ENCODE measurements at regions of chr6 and their contacts with region 1.

Region 1: DNA sequence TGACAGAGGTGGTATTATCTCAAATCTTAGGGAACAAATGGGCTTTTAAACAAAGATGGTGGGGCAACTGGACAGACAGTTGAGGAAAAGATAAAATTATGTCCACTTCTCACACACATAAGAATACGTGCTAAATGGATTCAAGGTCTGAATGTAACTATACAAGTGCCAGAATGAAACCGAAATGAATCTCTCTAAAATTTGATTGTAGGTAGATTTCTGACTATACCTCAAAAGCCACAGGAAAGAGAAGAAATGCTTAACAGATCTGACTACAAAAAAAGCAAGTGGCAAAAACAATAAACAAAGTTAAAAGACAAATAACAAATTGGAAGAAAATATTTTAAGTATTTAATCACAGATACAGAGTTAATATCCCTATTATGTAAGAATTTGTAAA is 182.7 kb upstream of the OLIG3 start:
- DNase-seq: no peak
- H3K4me3 Mint-ChIP-seq: peak overlapping the region; percentile 20
- H3K27ac Mint-ChIP-seq: peak overlapping the region; percentile 88
- H3K4me1 Mint-ChIP-seq: peaks cover 63% of the 10 kb centered on the region
- H3K27me3 Mint-ChIP-seq: peaks cover 3% of the 10 kb centered on the region

Region 2: DNA sequence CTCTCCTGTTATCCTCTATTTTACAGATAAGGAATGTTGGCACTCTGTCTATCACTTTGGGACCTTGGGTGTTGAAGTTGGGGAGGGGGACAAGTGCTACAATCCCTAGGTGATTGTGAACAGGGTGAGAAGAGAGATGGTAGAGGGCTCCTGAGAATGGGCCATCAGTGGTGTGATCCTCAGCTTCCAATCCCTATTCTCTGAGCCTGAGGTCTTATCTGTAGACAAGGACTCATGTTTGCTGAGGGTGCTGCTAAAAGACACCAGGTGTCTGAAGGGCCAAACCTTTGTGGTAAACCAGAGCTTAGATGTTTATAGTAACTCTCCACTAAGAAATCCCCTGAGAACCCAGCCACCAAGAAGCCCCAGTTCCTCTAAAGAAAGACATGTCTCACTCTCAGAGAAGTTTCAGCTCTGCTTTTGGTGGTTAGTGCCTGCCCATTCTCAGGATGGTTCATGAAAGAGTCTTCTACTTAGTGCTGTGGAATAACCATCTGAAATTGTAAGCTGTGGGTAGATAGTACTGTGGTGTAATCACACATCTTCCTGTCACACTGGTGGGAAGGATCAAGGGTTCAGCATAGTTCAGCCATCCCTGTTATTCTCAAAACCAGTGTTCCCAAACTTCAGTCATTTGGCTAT is 573.9 kb before region 1 on chr6:
- intact Hi-C with region 1: loop called (anchors 1 kb)
- DNase-seq: peak; percentile 57
- H3K4me3 Mint-ChIP-seq: peak overlapping the region; percentile 43
- H3K27ac Mint-ChIP-seq: peak overlapping the region; percentile 79
- H3K4me1 Mint-ChIP-seq: peaks cover 56% of the 10 kb centered on the region
- H3K27me3 Mint-ChIP-seq: no peaks in the 10 kb centered on the region

Region 3: DNA sequence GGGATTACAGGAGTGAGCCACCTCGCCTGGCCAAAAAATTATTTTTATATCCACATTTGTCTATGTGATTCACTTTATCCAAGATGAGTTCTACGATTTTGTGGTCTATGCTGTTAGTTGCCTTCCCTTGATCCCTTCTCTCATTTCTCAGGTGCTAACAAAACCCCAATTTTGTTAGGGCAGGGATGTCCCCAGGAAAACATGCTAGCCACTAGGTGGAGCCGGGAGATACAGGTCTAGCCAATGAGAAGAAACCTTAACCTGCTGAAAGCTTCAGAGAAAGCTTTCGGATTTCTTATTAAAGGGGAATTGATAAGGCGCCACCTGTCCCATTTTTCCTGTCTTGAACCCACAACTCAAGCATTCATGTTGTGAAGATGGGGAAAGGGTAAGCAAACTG is 15.3 kb before region 1 on chr6:
- intact Hi-C with region 1: loop called (anchors 1 kb)
- DNase-seq: no peak
- H3K4me3 Mint-ChIP-seq: no peak overlapping the region
- H3K27ac Mint-ChIP-seq: no peak overlapping the region
- H3K4me1 Mint-ChIP-seq: peaks cover 58% of the 10 kb centered on the region
- H3K27me3 Mint-ChIP-seq: peaks cover 2% of the 10 kb centered on the region

Region 4: DNA sequence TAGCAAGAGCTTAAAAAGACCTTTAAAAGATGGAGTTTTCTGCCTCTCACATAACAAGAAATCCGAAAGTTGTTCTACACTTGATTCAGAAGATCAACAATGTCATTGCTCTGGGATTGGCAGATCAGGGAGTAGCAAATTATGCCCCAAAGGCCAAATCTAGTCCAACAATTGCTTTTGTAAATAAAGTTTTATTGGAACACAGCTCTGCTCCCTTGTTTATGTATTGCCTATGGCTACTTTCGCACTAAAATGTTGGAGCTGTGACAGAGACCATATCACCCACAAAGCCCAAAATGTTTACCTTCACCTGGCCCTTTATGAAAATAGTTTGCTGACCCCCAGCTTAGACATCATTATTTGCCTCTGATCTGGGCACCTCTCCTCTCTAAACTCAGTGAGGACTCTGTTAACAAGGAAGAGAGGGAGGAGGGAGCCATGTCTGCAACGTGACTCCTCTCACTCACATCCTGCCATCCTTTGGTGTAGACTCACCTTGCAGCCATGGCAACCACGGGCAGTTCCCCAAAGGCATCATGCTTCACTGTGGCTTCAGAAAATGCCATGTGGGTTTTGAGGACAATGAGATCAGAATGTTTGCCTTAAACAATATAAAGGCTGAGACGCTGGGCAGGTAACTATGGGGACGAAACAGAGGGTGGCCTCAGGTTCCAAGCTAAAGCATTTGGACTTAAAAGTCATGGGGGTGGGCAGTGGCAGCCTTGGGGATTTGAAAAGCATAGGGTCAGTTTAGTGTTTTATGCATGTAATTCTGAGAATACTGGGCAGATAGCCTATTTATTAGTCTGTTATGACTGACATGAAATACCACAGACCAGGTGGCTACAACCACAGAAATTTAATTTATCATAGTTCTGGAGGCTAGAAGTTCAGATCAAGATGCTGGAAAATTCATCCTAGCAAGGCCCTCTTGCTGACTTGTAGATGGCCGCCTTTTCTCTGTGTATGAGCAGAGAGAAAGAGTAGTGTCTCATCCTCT is 40.5 kb after region 1 on chr6:
- intact Hi-C with region 1: no loop called
- DNase-seq: peak; percentile 81
- H3K4me3 Mint-ChIP-seq: peak overlapping the region; percentile 59
- H3K27ac Mint-ChIP-seq: peak overlapping the region; percentile 90
- H3K4me1 Mint-ChIP-seq: peaks cover 66% of the 10 kb centered on the region
- H3K27me3 Mint-ChIP-seq: peaks cover 5% of the 10 kb centered on the region

Region 5: DNA sequence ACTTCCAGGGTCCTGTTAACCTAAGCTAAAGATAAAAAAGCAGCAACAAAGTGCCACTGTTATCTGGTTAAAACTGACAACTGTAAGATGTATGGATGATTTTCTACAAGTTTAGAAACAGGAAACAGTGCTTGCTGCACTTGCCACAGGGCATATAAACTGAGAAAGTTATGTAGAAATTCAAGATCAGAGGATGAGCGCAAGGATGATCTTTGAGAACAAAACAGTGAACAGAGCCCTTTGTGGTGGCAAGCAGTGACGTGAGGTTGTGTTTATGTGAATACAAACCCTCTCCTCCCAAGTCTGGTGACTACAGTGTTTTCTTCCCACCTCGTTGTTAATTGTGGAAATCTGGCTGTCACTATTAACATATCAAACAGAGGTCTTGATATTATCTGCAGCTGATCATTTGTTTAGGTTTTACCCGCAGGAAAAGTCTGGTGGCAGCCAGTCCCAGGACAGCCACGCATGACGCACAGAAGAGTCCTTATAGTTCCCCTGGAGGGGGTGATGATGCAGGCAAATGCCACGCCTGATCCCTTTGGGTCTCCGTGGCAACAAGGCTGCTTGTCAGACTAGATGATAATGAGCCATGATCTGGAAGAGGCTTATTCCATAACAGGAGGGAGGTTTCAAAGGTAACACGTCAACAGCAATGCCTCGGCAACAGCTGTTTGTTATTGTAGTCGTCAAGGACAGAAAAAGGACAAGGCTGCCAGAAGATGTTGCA is 147.1 kb after region 1 on chr6:
- intact Hi-C with region 1: loop called (anchors 1 kb)
- DNase-seq: peak; percentile 68
- H3K4me3 Mint-ChIP-seq: peak overlapping the region; percentile 71
- H3K27ac Mint-ChIP-seq: peak overlapping the region; percentile 98
- H3K4me1 Mint-ChIP-seq: peaks cover 88% of the 10 kb centered on the region
- H3K27me3 Mint-ChIP-seq: no peaks in the 10 kb centered on the region

Region 6: GRCh38 chr6:137927777-137928218 is 250.9 kb after region 1 on chr6:
- intact Hi-C with region 1: loop called (anchors 1 kb)
- DNase-seq: peak; percentile 80
- H3K4me3 Mint-ChIP-seq: peak overlapping the region; percentile 52
- H3K27ac Mint-ChIP-seq: peak overlapping the region; percentile 93
- H3K4me1 Mint-ChIP-seq: peaks cover 82% of the 10 kb centered on the region
- H3K27me3 Mint-ChIP-seq: no peaks in the 10 kb centered on the region

Region 7: GRCh38 chr6:139153855-139154254 is 1477.0 kb after region 1 on chr6:
- intact Hi-C with region 1: loop called (anchors 10 kb)
- DNase-seq: no peak
- H3K4me3 Mint-ChIP-seq: peak overlapping the region; percentile 66
- H3K27ac Mint-ChIP-seq: peak overlapping the region; percentile 90
- H3K4me1 Mint-ChIP-seq: peaks cover 73% of the 10 kb centered on the region
- H3K27me3 Mint-ChIP-seq: no peaks in the 10 kb centered on the region

Measured in activated T-helper 1 cell treated with anti-CD3 and anti-CD28 coated beads, Interleukin-12 subunit alpha, Interleukin-12 subunit beta, Interleukin-2, Interleukin-4 antibody, amounts not matched to agents 30 ng/mL and 10 ng/mL and 1 ng/mL, durations not matched to agents 14 hours and 24 hours and 36 hours (primary cell).